Ascending aorta (tissue), 2 donors: ENCODE measurements at regions of chr9 and their contacts with region 1.

Region 1: GRCh38 chr9:124658165-124659017 is 112.7 kb downstream of the NR6A1 start:
- DNase-seq: peak; percentile 19 to 87
- H3K4me3 ChIP-seq: peak overlapping the region; percentile 56 to 68
- H3K27ac ChIP-seq: peak overlapping the region; percentile 66 to 79
- H3K4me1 ChIP-seq: peaks cover 0 to 4% of the 10 kb centered on the region in 2 donors
- H3K27me3 ChIP-seq: no peaks in the 10 kb centered on the region
- CTCF ChIP-seq: no peak

Region 2: DNA sequence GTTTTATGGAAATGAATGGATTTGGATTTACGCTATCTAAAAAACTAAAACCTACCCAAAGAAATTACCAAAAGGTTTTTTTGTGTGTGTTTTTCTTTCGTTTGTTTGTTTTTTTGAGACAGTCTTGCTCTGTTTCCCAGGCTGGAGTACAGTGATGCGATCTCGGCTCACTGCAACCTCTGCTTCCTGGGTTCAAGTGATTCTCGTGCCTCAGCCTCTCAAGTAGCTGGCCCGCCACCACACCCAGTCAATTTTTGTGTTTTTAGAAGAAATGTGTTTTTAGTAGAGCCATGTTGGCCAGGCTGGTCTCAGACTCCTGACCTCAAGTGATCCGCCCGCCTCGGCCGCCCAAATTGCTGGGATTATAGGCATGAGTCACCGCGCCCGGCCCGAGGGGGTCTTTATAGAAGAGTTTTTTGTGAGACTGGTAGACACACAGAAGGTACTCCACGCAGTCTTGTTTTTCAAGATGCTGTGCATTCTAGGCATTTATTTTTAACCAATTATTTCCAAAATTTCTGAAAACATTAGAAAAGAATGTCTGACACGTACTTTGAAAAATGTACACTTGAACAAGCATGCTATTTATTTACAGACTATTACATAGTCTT is 37.0 kb after region 1 on chr9:
- intact Hi-C with region 1: no loop called
- DNase-seq: no peak
- H3K4me3 ChIP-seq: no peak overlapping the region
- H3K27ac ChIP-seq: no peak overlapping the region
- H3K4me1 ChIP-seq: no peaks in the 10 kb centered on the region
- H3K27me3 ChIP-seq: no peaks in the 10 kb centered on the region
- CTCF ChIP-seq: no peak

Region 3: GRCh38 chr9:124852829-124853531 is 194.6 kb after region 1 on chr9 and contains the start of gene WDR38:
- intact Hi-C with region 1: loop called (anchors 10 kb)
- DNase-seq: peak; percentile 28 to 85
- H3K4me3 ChIP-seq: peak within 1 kb of the TSS; percentile 57 to 60
- H3K27ac ChIP-seq: peak within 1 kb of the TSS; percentile 28 to 50
- H3K4me1 ChIP-seq: peaks cover 7 to 11% of the 10 kb centered on the region in 2 donors
- H3K27me3 ChIP-seq: no peaks in the 10 kb centered on the region
- CTCF ChIP-seq: peak; percentile 92 to 98 (median 97)
- total RNA-seq, gene WDR38: not detected